ENCODE measurements at regions of chr17 and their contacts with region 1.

Region 1: GRCh38 chr17:51056813-51057510 is 63.7 kb downstream of the SPAG9 start:
- DNase-seq: no peak
- ATAC-seq: peak; percentile 71
- H3K4me3 Mint-ChIP-seq: no peak overlapping the region
- H3K27ac Mint-ChIP-seq: no peak overlapping the region
- H3K4me1 Mint-ChIP-seq: peaks cover 20% of the 10 kb centered on the region
- H3K27me3 Mint-ChIP-seq: no peaks in the 10 kb centered on the region
- CTCF ChIP-seq: peak; percentile 63

Region 2: DNA sequence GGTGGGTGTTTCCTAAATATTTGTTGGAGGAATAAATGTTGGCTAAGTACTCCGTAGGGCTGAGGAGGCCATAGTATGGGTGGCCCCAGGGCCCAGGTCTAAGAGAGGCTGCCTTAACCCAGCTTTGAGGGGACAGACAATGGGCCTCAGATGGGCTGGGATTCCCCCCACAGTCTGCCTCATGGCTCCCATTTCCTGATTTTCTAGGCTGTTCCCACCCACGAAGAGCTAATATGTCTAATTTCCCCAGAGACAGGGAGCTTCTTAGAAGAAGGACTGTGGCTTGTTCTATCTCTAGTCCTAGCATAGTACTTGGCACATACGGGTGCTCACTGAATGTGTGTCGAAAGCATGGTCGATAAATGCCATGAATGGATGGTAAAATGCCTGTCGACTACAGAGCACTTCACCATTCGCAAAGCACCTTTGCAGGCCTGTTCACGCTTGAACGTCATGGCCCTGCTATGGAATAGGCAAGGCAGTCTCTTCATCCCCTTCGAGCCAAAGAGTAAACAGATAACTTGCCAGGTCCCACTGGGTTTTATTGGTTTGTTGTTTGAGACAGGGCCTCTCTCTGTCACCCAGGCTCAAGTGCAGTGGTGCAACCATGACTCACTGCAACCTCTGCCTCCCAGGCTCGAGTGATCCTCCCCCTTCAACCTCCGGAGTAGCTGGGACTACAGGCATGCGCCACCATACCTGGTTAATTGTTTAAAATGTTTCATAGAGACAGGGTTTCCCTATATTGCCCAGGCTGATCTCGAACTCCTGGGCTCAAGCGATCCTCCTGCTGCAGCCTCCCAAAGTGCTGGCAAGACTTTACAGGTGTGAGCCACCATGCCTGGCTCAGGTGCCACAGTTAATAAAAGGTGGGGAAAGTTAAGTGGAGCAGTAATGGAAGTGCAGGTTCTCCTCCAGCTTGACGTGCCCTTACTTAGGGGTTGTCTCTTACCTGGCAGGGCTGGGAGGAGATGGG is 598.0 kb before region 1 on chr17:
- CTCF ChIA-PET with region 1: no interaction called
- POLR2A ChIA-PET with region 1: no interaction called
- intact Hi-C with region 1: no loop called
- DNase-seq: no peak
- ATAC-seq: no peak
- H3K4me3 Mint-ChIP-seq: no peak overlapping the region
- H3K27ac Mint-ChIP-seq: no peak overlapping the region
- H3K4me1 Mint-ChIP-seq: peaks cover 9% of the 10 kb centered on the region
- H3K27me3 Mint-ChIP-seq: no peaks in the 10 kb centered on the region
- CTCF ChIP-seq: no peak

Region 3: DNA sequence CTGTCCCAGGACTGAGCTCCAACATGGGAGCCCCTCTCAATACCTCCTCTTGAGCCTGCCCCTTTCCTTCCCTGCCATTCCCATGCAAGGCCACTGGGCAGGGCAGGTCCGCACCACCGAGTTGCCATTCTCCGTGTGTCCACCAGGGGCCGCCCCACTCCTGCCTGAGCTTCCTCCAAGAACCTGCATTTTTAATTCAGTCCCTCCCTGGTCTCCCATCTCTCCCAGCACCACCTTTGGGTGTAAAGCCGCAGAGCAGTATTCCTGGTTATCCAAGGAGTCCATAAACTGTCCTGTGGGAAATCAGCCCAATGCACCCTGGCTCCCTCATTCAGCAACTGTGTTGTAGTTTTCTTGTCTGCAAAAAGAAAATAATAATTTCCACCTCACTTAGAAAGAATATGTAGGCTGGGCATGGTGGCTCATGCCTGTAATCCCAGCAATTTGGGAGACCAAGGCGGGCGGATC is 273.7 kb before region 1 on chr17:
- CTCF ChIA-PET with region 1: no interaction called
- POLR2A ChIA-PET with region 1: no interaction called
- intact Hi-C with region 1: loop called (anchors 1 kb)
- DNase-seq: peak; percentile 76
- ATAC-seq: peak; percentile 99
- H3K4me3 Mint-ChIP-seq: no peak overlapping the region
- H3K27ac Mint-ChIP-seq: no peak overlapping the region
- H3K4me1 Mint-ChIP-seq: peaks cover 6% of the 10 kb centered on the region
- H3K27me3 Mint-ChIP-seq: peaks cover 9% of the 10 kb centered on the region
- CTCF ChIP-seq: peak; percentile 88

Region 4: DNA sequence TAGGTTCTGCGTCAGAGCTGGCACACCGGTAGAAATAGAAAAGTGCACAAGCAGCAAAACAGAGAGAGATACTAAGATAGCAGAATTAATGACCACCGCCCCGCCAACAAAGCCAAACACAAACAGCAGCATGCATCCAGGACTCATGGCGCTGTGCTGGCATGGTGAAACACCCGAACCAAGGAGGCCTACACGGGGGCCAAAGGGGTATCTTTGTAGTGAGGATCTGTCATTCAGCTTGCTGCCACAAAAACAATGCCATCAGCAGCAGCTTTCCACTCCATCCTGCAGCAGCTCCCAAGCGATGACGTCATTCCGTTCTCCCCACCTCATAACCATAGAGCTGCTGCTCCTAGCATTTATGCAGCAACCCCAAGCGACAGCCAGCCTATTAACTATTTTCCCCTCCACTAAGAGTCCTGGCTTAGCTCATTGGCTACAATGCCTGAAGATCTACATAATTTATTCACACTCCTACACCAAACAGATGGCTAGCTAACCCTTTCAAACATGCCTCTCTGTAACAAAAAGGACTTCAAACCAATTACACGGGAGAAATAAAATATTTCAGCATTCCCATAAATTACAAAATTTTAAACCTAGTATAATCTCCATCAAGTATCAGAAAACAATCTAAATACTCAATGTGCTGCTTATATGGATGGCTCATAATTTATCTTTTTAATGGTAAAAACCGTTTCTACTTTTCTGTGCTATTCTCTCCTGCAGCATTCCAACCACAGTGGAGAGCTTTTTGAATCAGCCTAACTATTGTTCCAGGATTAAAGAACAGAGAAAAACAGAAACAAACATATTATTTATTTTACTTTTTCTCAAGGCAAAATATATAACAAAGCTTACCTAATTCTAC is 10.2 kb before region 1 on chr17:
- CTCF ChIA-PET with region 1: interaction called, 12 read pairs
- POLR2A ChIA-PET with region 1: no interaction called
- intact Hi-C with region 1: no loop called
- DNase-seq: no peak
- ATAC-seq: no peak
- H3K4me3 Mint-ChIP-seq: no peak overlapping the region
- H3K27ac Mint-ChIP-seq: no peak overlapping the region
- H3K4me1 Mint-ChIP-seq: peaks cover 26% of the 10 kb centered on the region
- H3K27me3 Mint-ChIP-seq: no peaks in the 10 kb centered on the region
- CTCF ChIP-seq: no peak

Region 5: DNA sequence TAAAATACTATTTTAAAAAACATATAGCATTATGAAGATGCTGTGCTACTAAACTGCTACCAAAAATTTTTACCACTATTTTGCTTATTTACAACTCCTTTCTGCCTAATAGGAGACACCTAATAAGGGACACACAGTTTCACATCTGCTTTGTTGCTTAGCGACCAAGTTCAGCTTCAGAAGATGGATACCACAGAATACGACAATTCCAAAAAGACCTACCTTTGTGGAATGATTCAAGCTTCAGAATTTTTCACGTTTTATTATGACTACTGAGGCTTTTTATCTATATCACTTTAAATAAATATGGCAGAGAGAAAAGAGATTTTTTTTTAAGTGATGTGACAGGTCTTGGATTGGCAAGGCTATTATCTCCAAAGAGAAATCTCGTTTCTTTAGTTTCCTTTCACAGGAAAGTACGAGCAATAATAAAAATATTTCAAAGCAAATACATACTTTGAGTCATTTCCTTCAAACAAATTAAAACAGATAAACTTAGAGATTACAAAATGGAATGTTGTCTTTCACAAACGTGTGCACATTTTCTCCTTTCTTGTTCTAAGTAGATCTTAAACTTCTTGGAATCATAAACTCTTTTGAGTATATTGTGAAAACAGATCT is 28.3 kb after region 1 on chr17:
- CTCF ChIA-PET with region 1: no interaction called
- POLR2A ChIA-PET with region 1: no interaction called
- intact Hi-C with region 1: no loop called
- DNase-seq: no peak
- ATAC-seq: no peak
- H3K4me3 Mint-ChIP-seq: no peak overlapping the region
- H3K27ac Mint-ChIP-seq: no peak overlapping the region
- H3K4me1 Mint-ChIP-seq: peaks cover 27% of the 10 kb centered on the region
- H3K27me3 Mint-ChIP-seq: no peaks in the 10 kb centered on the region
- CTCF ChIP-seq: no peak

Region 6: GRCh38 chr17:51132964-51133319 is 76.0 kb after region 1 on chr17:
- CTCF ChIA-PET with region 1: no interaction called
- POLR2A ChIA-PET with region 1: interaction called, 10 read pairs
- intact Hi-C with region 1: no loop called
- DNase-seq: no peak
- ATAC-seq: no peak
- H3K4me3 Mint-ChIP-seq: no peak overlapping the region
- H3K27ac Mint-ChIP-seq: no peak overlapping the region
- H3K4me1 Mint-ChIP-seq: peaks cover 2% of the 10 kb centered on the region
- H3K27me3 Mint-ChIP-seq: no peaks in the 10 kb centered on the region
- CTCF ChIP-seq: no peak

Region 7: GRCh38 chr17:51153210-51154072 is 96.5 kb after region 1 on chr17 and contains the start of gene NME1:
- CTCF ChIA-PET with region 1: interaction called, 20 read pairs
- POLR2A ChIA-PET with region 1: interaction called, 6 read pairs
- intact Hi-C with region 1: loop called (anchors 1 kb)
- DNase-seq: peak; percentile 99
- ATAC-seq: peak; percentile 88
- H3K4me3 Mint-ChIP-seq: no peak within 1 kb of the TSS
- H3K27ac Mint-ChIP-seq: no peak within 1 kb of the TSS
- H3K4me1 Mint-ChIP-seq: peaks cover 7% of the 10 kb centered on the region
- H3K27me3 Mint-ChIP-seq: no peaks in the 10 kb centered on the region
- CTCF ChIP-seq: no peak
- total RNA-seq, gene NME1: 130 and 138 TPM in 2 replicates

Measured in activated B cell treated with CpG ODN at 0.5 μM for 24 hours (primary cell).